Activated CD8-positive, alpha-beta T cell treated with anti-CD3 and anti-CD28 coated beads for 36 hours (primary cell): ENCODE measurements at regions of chr17 and their contacts with region 1.

Region 1: DNA sequence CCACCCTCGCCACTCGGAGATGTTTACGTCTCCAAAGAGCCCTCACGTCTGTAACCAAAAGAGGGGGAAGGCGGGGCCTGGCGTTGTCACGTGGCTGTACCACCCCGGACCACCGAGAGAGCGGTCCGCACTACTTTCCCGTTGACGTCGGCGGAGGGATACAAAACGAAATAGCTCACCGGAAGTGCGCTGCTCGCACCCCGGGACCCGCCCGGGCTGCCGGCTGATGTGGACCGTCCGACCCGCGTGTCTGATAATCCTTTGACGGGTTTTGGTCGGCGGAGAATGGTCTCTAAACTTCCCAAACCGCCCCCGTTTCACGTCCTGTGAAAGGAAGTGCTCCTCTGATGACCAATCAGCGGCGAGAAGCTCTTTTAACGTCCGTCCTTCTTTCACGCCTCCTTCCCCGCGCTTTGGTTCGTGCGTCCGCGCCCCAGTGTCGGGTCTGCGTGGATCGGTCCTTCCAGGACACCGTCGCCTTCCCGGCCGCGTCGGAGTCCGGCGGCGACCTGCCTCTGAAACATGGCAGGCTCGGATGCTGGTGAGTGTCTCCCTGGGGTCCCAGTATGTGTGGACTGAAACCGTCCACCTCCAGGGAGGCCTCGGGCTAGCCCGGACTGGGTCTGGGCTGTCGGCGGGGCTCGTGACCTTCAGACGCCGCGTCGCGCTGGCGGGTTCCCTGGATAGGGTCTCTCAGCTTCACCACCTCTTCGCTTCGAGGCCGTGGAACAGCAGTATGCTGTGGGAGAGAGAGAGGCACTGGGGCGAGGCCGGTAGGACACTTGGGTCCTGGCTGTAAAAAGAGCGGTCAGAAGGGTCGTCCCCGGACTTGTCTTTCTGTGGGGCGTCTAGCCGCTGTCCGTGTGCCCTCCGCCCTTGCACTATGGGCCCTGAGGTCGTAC is at the start of gene CEP95:
- DNase-seq: peak; percentile 98
- ATAC-seq: peak; percentile 70
- H3K4me3 Mint-ChIP-seq: peak within 1 kb of the TSS; percentile 91
- H3K27ac Mint-ChIP-seq: peak within 1 kb of the TSS; percentile 99
- H3K4me1 Mint-ChIP-seq: peaks cover 53% of the 10 kb centered on the region
- H3K27me3 Mint-ChIP-seq: no peaks in the 10 kb centered on the region
- CTCF ChIP-seq: no peak
- total RNA-seq, gene CEP95: 45.2 to 45.7 TPM

Region 2: DNA sequence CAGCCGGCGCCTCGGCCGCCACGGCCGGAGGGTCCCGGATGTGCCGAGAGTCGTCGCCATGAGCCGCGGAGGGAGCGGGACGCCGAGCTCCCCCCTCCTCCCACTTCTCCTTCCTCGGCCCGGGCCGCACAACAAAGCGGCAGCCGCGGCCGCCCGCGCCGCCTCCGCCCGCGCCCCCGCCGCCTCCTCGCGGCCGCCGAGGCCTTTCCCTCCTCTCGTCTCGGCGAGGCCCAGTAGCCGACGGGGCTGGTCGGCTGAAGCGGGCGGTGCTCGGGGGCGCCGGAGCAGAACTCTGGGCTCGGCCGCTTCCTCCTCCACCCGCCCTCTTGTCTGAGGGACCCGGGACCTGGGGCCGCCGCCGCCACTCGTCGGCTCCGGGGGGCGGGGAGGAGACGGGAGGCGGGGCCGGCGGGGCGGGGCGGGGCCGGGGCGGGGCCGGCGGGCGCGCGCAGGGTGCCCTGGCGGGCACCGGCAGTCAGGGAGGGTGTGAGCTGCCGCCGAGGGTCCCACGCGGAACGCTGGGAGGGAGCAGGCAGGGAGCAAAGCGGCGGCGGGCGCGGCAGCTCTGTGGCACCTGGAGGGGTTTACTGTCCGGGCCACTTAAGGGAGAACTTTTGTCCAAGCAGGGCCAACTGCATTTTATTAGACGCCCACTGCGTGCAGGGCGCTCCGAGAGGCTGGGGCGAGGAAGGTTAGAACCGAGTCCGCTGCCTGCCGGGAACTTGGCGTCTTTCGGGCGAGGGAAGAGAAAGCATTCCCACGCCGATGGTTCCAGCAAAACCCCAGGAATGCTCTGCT is 155.3 kb after region 1 on chr17 and contains the start of gene SMURF2:
- CTCF ChIA-PET with region 1: no interaction called
- POLR2A ChIA-PET with region 1: interaction called, 16 read pairs
- intact Hi-C with region 1: loop called (anchors 5 kb)
- DNase-seq: peak; percentile 81
- ATAC-seq: peak; percentile 89
- H3K4me3 Mint-ChIP-seq: peak within 1 kb of the TSS; percentile 95
- H3K27ac Mint-ChIP-seq: peak within 1 kb of the TSS; percentile 93
- H3K4me1 Mint-ChIP-seq: peaks cover 26% of the 10 kb centered on the region
- H3K27me3 Mint-ChIP-seq: no peaks in the 10 kb centered on the region
- CTCF ChIP-seq: no peak
- total RNA-seq, gene SMURF2: 13.8 to 13.9 TPM